Left cardiac atrium (tissue), 4 donors: ENCODE measurements at regions of chr4 and their contacts with region 1.

Region 1: DNA sequence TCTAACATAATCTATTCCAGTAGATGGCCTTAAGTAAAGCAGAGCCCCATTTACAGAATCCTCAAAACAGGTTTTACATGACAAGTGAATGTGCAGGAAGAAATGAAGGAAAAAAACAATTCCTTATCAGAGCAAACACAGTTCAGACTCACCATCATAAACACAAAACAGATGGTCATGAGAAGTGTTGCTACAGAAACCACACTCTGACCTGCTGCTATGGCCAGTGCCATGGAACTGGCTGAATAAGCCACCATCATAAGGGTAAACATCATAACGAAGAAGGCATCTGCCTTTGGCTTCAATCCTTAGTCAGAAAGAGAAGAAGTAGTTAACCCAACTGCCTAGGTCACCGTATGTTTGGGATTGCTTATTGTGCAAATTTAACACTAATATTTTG is 61.1 kb downstream of the ABCG2 start:
- DNase-seq: no peak
- ATAC-seq: no peak

Region 2: DNA sequence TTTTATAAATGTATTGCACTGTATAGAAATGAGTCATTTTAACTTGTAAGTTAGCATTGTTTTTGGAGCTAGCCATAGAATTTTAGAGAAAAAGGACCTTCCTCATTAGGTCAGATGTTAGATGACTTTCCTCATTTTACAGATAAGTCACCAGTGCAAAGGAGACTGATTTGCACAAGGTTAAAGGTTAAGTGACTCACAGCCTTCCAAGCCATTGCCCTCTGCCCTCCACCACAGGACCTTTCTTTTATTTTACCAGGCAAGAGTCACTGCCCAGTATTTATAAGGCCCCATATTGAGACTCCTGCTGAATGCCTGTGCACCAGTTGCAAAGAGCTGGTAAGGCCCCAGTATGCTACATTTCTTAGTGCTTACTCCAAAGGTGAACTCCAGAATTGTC is 65.3 kb after region 1 on chr4:
- intact Hi-C with region 1: loop called in 1 of 2 experiments (anchors 10 kb)
- DNase-seq: no peak
- ATAC-seq: no peak